MCF 10A (cell line): ENCODE measurements at regions of chr2 and their contacts with region 1.

Region 1: DNA sequence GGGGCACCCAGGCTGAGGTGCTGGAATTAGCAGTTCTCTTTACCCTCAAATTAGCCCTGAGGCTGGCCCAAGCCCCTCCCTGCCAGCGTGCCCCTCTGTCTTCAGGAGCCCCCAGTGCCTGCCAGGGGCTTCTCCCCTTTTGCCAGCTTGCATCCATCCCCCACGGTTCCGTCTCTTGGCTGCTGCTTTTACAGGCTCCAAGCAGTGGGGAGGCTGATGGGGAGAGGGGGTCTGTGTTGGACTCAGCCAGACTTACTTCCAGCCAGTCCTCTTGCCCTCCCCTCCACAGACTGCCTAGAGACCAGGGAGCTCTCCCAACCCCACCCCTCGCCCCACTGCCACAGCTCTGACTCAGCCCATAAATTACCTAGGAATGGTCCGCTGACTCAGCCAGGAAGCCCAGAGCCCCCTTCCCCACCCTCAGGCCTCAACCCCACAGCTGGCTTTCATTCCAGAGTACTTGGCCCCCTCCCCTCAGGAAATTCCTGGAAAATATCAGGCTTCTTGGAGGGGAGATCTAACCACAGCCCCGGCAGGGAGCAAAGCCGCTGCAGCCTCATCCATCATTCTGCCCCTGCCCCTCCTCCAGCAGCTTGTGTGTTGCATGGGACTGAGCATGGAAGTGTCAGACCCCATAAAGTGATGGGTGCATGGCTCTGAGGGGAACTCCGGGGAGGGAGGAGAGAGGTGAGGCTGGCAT is 184.6 kb downstream of the ZFP36L2 start:
- DNase-seq: peak; percentile 93
- H3K4me3 Mint-ChIP-seq: peak overlapping the region; percentile 50
- H3K27ac Mint-ChIP-seq: peak overlapping the region; percentile 92
- H3K4me1 Mint-ChIP-seq: peaks cover 44% of the 10 kb centered on the region
- H3K27me3 Mint-ChIP-seq: no peaks in the 10 kb centered on the region
- CTCF ChIP-seq: no peak

Region 2: DNA sequence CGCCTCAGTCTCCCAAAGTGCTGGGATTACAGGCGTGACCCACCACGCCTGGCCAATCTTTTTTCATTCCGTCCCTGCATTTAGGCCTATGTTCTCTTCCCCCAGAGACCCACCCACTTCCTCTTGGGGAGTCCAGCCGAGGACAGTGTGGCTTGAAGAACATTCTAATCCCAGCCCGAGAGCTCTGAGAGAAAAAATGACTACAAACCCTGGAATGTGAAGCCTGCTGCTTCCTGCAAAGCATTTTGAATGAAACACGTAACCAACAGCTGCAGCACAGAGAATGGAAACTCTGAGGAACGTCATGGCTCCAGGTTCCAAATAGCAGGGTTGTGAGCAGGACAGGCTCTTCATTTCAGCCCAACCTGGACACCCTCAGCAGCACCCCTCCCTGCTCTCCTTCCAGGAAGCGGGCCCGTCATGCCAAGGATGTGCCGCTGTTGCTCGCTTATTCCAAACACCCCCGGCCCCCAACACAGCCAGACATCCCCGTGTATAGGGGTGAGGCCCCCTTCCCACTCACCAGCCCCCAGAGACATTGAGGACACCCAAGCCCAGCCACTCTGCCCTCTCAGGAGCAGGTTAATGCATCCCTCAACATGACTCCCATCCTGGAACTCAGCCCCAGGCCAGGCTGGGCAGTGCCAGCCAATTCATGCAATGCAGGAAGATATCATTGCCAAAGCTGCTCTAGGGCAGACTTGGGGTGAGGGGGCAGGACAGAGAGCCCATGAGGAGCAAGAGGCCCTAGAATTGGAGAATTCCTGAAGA is 44.8 kb after region 1 on chr2:
- CTCF ChIA-PET with region 1: no interaction called
- POLR2A ChIA-PET with region 1: interaction called, 8 read pairs
- intact Hi-C with region 1: loop called (anchors 5 kb)
- DNase-seq: peak; percentile 98
- H3K4me3 Mint-ChIP-seq: peak overlapping the region; percentile 48
- H3K27ac Mint-ChIP-seq: peak overlapping the region; percentile 94
- H3K4me1 Mint-ChIP-seq: peaks cover 60% of the 10 kb centered on the region
- H3K27me3 Mint-ChIP-seq: no peaks in the 10 kb centered on the region
- CTCF ChIP-seq: no peak